Ascending aorta (tissue), 2 donors: ENCODE measurements at regions of chr4 and their contacts with region 1.

Region 1: DNA sequence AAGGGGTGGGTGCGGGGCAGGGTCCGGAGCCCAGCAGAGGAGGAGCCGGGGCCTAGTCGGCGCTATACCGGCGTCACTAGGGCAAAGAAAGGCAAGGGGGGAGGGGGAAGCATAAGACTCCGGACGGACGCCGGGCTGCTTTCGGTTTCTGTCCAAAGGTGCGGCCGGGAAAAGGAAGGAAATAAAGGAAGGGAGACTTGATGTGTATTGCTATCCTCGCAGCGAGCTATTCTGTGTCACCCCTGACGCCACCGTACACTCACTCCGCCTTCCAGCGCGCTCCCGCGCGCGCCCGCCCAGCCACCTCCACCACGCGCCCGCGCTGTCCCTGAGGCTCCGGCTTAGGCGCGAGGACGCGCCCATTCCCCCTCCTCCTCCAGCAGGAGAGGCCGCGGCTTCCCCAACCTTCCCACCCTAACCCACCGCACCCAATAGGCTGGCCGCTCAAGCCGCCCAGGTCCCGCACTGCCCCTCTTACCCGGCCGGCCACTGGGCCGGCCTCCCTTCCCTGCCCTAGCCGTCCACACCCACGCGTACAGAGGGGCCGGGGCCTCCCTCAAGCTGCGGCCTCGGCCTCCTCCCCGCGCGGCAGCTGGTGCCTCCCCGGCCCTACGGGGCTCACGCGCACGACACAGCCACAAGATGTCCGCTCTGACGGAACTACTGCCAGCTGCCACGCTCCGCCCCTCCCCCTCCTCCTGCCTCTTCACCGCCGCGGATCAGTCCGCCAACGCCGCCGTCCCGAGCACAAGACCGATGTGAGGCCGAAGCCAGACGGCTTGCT is at the start of gene UBE2D3:
- DNase-seq: peak; percentile 67 to 96
- H3K4me3 ChIP-seq: peak within 1 kb of the TSS; percentile 83 to 88
- H3K27ac ChIP-seq: peak within 1 kb of the TSS; percentile 100
- H3K4me1 ChIP-seq: peaks cover 0 to 19% of the 10 kb centered on the region in 2 donors
- H3K27me3 ChIP-seq: no peaks in the 10 kb centered on the region
- CTCF ChIP-seq: no peak
- total RNA-seq, gene UBE2D3: 379 TPM

Region 2: DNA sequence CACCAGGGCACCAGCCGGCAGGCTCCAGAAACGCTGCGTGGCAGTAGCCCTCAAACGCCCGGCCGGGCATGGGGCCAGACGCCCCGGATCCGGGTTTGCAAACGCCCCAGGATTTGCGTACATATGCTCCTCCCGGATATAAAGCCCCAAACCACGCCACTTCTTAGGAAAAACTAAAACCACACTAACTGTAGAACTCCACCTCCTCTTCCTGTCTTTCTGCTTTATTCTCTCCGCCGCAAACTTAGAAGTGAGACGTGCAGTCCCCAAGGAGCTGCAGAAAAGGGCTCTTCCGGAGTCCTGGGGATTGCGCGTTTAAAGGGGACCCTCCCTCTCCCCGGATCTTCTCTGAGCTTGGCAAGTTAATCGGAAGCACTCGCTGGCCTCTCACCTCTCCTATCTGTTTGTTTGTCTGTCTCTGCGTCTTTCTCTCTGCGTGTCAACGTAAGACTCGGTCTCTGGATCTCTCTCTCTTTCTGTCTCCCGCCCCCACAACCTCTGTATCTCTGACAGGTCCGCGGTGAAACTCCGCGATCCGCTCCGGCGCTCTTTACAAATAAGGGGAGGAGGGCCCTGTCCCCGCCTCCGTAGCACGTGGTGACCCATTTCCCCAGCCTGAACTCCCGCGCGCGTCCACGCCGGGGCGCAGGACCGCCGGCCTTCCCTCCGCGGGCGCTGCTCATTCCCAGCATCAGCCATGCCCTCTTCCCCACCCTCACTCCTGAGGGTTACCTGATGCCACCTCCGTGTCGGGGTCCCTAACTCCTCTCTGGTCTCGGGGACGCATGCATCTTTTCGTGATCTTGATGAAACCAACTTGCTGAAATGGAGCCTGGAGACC is 481.9 kb before region 1 on chr4 and contains the start of gene SLC39A8:
- intact Hi-C with region 1: loop called (anchors 5 kb)
- DNase-seq: peak; percentile 50 to 92
- H3K4me3 ChIP-seq: peak within 1 kb of the TSS; percentile 83 to 86
- H3K27ac ChIP-seq: peak within 1 kb of the TSS; percentile 23 to 64
- H3K4me1 ChIP-seq: peaks cover 0 to 3% of the 10 kb centered on the region in 2 donors
- H3K27me3 ChIP-seq: no peaks in the 10 kb centered on the region
- CTCF ChIP-seq: peak; percentile 79 to 86 (median 85)
- total RNA-seq, gene SLC39A8: 17.1 TPM

Region 3: DNA sequence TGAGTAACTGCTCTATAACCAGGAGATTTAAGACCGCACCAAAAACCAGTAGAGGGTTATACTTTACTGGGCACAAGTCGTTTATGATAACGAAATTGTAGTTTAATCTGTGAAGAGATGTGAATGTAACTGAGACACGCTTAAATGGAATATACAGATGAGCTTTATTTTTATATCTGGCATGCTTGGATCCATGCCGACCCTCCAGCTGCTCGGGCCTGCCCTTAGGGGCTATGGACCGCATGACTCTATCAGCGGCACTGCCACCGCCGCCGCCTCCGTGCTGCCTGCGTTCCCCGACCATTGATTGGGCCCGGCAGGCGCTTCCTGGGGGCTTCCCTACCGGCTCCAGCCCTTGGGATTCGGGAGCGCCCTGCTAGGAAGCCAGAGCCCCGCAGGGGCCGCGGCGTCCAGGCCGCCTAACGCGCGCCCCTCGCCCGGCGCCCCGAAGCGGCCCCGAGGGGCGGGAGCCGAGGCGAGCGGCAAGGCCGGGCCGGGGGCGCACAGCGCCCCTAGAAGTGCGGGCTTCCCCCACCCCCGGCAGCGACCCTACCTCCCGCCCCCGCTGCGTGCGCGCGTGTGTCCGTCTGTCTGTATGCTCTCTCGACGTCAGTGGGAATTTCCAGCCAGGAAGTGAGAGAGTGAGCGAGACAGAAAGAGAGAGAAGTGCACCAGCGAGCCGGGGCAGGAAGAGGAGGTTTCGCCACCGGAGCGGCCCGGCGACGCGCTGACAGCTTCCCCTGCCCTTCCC is 326.2 kb before region 1 on chr4 and contains the start of gene NFKB1:
- intact Hi-C with region 1: loop called (anchors 2 kb)
- DNase-seq: peak; percentile 19 to 82
- H3K4me3 ChIP-seq: peak within 1 kb of the TSS; percentile 88 to 98
- H3K27ac ChIP-seq: peak within 1 kb of the TSS; percentile 93 to 99
- H3K4me1 ChIP-seq: peaks cover 0 to 20% of the 10 kb centered on the region in 2 donors
- H3K27me3 ChIP-seq: no peaks in the 10 kb centered on the region
- CTCF ChIP-seq: no peak
- total RNA-seq, gene NFKB1: 34.5 TPM

Region 4: GRCh38 chr4:102760645-102761295 is 66.3 kb before region 1 on chr4 and contains the start of gene MANBA:
- intact Hi-C with region 1: loop called (anchors 2 kb)
- DNase-seq: peak; percentile 30 to 88
- H3K4me3 ChIP-seq: peak within 1 kb of the TSS; percentile 87 to 91
- H3K27ac ChIP-seq: peak within 1 kb of the TSS; percentile 71 to 79
- H3K4me1 ChIP-seq: peaks cover 0 to 2% of the 10 kb centered on the region in 2 donors
- H3K27me3 ChIP-seq: no peaks in the 10 kb centered on the region
- CTCF ChIP-seq: no peak
- total RNA-seq, gene MANBA: 9.7 TPM

Region 5: DNA sequence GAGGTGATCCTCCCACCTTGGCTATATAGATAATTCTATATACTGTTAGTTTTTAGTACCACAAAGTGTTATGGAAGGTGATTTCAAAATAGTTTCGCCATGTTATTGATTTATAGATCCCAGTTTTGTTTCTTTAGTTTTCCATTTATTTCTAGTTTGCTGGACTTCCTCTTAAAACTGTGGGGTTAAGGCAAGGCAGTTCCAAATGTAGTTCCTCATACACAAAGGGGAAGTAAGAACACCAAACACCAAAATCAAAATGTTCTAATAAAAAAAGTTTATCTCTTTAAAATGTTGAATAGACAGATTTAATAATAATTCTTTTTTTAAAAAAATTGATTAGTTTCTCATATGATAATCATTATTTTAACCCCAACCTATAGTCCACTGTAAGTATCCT is 34.9 kb after region 1 on chr4:
- intact Hi-C with region 1: no loop called
- DNase-seq: no peak
- H3K4me3 ChIP-seq: no peak overlapping the region
- H3K27ac ChIP-seq: no peak overlapping the region
- H3K4me1 ChIP-seq: no peaks in the 10 kb centered on the region
- H3K27me3 ChIP-seq: no peaks in the 10 kb centered on the region
- CTCF ChIP-seq: no peak

Region 6: DNA sequence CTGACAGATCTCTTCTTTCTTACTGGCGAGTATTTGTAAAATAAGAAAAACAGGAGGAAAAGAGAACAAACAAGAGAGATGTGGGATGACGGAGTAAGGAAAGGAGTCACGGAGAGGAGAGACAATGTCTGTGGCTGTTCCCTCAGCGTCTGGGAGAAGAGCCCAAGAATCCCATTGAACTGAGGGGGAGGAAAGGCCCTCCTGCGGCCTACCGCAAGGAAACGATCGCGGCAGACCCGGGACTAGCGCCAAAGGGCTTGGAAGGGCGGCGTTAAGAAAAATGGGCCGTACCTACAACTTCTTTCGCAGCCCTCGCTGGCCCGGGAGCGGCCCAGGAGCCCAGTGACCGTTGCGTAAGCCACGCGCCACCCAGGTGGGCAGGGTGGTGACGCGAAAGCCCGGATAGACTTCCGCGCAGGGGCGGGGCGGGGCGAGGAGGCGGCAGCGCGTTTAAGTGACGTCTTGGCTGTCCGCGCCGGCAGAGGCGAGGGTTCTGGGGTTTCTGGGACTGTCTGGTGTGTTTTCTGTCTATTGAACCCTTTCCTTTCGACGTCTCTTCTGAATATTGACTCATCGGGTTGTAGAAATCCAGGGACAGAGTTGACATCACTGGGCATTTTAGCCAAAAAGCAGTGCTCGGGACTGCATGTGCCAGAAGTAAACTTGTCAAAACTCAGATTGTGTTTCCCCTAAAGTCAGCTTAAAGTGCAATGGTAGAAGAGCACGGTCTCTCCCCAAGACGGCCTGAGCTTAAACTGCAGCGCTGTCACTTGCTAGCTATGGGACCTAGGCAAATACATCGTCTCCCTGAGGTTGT is 192.4 kb after region 1 on chr4 and contains the start of gene SLC9B1:
- intact Hi-C with region 1: loop called (anchors 1 kb)
- DNase-seq: peak; percentile 85 to 98
- H3K4me3 ChIP-seq: peak within 1 kb of the TSS; percentile 66 to 71
- H3K27ac ChIP-seq: peak within 1 kb of the TSS; percentile 91 to 96
- H3K4me1 ChIP-seq: peaks cover 3 to 7% of the 10 kb centered on the region in 2 donors
- H3K27me3 ChIP-seq: no peaks in the 10 kb centered on the region
- CTCF ChIP-seq: no peak
- total RNA-seq, gene SLC9B1: not detected

Region 7: DNA sequence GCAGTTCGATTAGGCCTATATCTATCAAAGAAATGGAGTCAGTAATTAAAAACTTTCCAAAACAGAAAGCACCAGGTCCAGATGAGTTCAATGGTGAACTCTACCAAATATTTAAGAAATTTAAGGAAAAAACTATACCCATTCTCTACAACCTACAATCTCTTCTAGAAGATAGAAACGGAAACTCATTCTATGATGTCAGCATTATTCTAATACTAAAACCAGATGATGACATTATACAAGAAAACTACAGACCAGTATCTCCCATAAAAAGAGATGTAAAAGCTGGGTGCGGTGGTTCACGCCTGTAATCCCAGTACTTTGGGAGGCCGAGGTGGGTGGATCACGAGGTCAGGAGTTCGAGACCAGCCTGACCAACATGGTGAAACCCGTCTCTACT is 302.1 kb after region 1 on chr4:
- intact Hi-C with region 1: no loop called
- DNase-seq: no peak
- H3K4me3 ChIP-seq: no peak overlapping the region
- H3K27ac ChIP-seq: no peak overlapping the region
- H3K4me1 ChIP-seq: no peaks in the 10 kb centered on the region
- H3K27me3 ChIP-seq: no peaks in the 10 kb centered on the region
- CTCF ChIP-seq: no peak

Region 8: GRCh38 chr4:103198111-103198765 is 371.2 kb after region 1 on chr4 and contains the start of gene CENPE:
- intact Hi-C with region 1: loop called (anchors 2 kb)
- DNase-seq: peak; percentile 36 to 91
- H3K4me3 ChIP-seq: peak within 1 kb of the TSS; percentile 61 to 99
- H3K27ac ChIP-seq: peak within 1 kb of the TSS; percentile 56 to 67
- H3K4me1 ChIP-seq: peaks cover 0 to 5% of the 10 kb centered on the region in 2 donors
- H3K27me3 ChIP-seq: no peaks in the 10 kb centered on the region
- CTCF ChIP-seq: no peak
- total RNA-seq, gene CENPE: not detected